Dorsolateral prefrontal cortex (tissue), 120 donors: ENCODE measurements at regions of chr3 and their contacts with region 1.

Region 1: GRCh38 chr3:48439820-48440589 is at the starts of genes CCDC51 and TMA7:
- DNase-seq: peak; percentile 98 to 100 (median 99)
- H3K4me3 ChIP-seq: peak within 1 kb of the TSS; percentile 67 to 100 (median 93)
- H3K27ac ChIP-seq: peak within 1 kb of the TSS in 58 of 59 donors; percentile 48 to 95 (median 84)
- H3K27me3 ChIP-seq: no peaks in the 10 kb centered on the region
- CTCF ChIP-seq: peak in 38 of 56 donors; percentile 5 to 54 (median 22)
- total RNA-seq, gene CCDC51: 5.5 to 17.7 (median 10.0) TPM
- total RNA-seq, gene TMA7: 127 to 251 (median 193) TPM

Region 2: DNA sequence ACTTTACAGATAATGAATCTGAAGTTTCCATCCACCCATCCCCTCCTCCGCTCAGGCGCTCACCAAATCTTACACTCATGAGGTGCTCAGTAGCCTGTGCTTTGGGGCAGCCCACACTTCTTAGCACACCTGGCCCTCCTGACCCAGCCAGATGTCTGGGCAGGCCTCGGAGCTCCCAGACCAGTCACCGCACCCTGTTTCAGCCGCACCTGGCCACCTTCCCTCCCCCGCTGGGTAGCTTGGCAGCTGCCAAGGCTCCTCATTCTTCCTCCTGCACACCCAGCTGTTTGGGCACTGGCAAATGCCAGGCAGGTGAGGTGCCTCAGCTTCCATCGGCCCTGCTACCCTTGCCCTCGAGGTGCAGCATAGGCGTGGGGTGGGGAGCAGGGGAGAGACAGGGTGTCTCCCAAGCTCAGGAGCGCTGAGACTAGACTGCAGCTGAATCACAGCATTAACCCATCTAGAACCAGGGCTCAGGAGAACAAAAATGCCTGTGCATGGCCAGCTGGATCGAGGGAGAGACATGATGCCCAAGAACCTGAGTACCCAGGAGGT is 297.6 kb before region 1 on chr3:
- intact Hi-C with region 1: no loop called
- DNase-seq: no peak
- H3K4me3 ChIP-seq: no peak overlapping the region
- H3K27ac ChIP-seq: no peak overlapping the region
- H3K27me3 ChIP-seq: no peaks in the 10 kb centered on the region
- CTCF ChIP-seq: no peak

Region 3: DNA sequence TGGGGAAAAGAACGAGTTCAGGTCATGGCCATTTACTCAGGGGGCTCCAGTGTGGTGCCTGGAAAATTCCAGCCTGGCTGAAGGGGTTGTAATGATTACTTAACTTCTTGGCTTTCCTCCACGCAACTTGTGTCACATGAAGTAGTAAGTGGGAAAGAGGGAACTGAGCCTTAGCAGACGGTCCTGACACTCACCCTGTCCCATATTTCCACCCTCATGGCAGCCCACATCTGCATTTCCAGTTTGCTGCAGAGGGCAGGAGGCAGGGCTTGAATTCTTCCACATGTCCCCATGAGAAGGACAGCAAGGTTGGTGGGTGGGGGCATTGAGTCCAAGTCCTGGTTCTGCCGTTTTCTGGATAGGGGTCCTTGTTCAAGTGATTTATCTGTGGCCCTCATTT is 224.5 kb before region 1 on chr3:
- intact Hi-C with region 1: no loop called
- DNase-seq: peak in 1 of 10 donors; percentile 5
- H3K4me3 ChIP-seq: no peak overlapping the region
- H3K27ac ChIP-seq: peak overlapping the region in 8 of 59 donors; percentile 11 to 70 (median 36)
- H3K27me3 ChIP-seq: no peaks in the 10 kb centered on the region
- CTCF ChIP-seq: no peak

Region 4: DNA sequence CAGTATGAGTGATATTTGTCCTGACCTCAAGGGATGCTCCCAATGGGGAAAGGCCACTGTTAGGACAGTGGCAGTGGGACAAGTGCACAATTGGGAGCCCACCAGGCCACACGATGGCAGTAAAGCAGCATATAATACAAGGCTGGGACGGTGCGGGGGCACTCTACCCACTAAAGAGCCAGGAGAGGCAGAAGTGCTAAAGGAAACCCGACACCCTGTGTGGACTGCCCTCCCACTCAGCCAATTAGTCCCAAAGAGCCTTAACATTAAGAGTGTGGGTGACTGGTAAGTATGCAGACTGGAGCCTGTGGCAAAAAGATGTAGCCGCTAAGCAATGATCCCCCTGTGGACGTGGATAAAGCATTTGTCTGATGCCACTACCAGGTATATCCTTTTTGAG is 207.3 kb before region 1 on chr3:
- intact Hi-C with region 1: loop called in 1 of 2 experiments (anchors 5 kb)
- DNase-seq: peak; percentile 69 to 94 (median 84)
- H3K4me3 ChIP-seq: peak overlapping the region in 55 of 59 donors; percentile 6 to 66 (median 46)
- H3K27ac ChIP-seq: peak overlapping the region in 21 of 59 donors; percentile 3 to 58 (median 38)
- H3K27me3 ChIP-seq: no peaks in the 10 kb centered on the region
- CTCF ChIP-seq: peak in 55 of 56 donors; percentile 38 to 84 (median 70)

Region 5: DNA sequence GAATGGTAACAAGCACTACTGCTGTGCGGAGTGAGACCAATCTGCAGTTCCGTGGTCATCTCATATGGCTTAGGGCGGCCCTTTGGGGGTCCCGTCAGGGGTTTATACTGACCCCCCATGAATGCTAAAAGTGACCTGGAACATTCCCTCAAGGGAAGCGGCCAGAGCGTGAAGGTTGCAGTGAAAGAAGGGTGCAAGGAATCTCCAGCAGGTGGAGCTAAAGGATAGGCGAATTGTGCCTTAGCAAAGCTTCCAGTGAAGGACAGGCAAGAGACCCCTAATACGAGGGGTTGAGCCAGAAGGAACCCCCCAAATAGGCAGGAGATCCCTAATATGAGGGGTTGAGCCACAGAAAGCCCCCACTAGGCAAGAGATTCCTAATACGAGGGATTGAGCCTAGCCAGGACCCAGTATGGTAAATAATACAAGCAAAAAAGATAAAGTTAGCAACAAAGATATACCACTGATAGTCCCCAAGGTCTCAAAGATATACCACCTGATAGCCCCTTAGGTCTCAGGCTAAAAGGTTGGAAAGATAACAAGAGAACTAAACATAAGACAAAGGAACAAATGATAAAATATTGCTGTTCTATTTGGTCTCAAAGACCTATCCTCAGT is 166.3 kb before region 1 on chr3:
- intact Hi-C with region 1: loop called (anchors 1 to 2 kb)
- DNase-seq: peak in 6 of 10 donors; percentile 21 to 59 (median 50)
- H3K4me3 ChIP-seq: no peak overlapping the region
- H3K27ac ChIP-seq: no peak overlapping the region
- H3K27me3 ChIP-seq: no peaks in the 10 kb centered on the region
- CTCF ChIP-seq: peak; percentile 44 to 87 (median 75)

Region 6: GRCh38 chr3:48285132-48285531 is 154.9 kb before region 1 on chr3:
- intact Hi-C with region 1: no loop called
- DNase-seq: no peak
- H3K4me3 ChIP-seq: no peak overlapping the region
- H3K27ac ChIP-seq: no peak overlapping the region
- H3K27me3 ChIP-seq: no peaks in the 10 kb centered on the region
- CTCF ChIP-seq: no peak

Region 7: GRCh38 chr3:48301020-48301796 is 138.8 kb before region 1 on chr3:
- intact Hi-C with region 1: loop called in 1 of 2 experiments (anchors 5 kb)
- DNase-seq: peak; percentile 77 to 93 (median 86)
- H3K4me3 ChIP-seq: peak within 1 kb of the TSS; percentile 69 to 100 (median 89)
- H3K27ac ChIP-seq: peak within 1 kb of the TSS; percentile 13 to 97 (median 89)
- H3K27me3 ChIP-seq: no peaks in the 10 kb centered on the region
- CTCF ChIP-seq: peak in 36 of 56 donors; percentile 3 to 58 (median 26)

Region 8: DNA sequence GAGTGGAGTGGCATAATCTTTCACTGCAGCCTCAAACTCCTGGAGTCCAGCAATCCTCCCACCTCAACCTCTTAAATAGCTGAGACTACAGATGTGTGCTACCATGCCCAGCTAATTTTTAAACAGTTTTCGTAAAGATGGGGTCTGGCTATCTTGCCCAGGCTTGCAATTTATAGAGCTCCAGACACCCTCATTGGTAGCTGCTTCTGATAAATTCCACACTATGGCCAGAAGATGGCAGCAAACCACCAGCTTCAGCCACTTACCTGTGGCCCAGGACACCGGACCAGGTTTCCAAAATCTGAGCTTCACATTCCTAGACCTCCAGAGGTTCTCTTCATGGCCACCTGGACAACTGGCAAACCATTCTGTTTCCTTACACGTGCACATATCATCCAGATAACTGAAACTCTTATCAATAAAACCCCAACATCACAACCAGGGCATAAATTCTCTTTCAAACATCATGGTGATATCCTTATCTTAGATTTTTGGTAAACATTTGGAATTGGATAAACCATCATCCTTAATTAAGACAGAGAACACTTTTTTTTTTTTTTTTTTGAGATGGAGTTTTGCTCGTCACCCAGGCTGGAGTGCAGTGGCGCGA is 39.1 kb before region 1 on chr3:
- intact Hi-C with region 1: loop called (anchors 1 kb)
- DNase-seq: peak in 9 of 10 donors; percentile 45 to 72 (median 53)
- H3K4me3 ChIP-seq: no peak overlapping the region
- H3K27ac ChIP-seq: peak overlapping the region in 11 of 59 donors; percentile 47 to 78 (median 75)
- H3K27me3 ChIP-seq: no peaks in the 10 kb centered on the region
- CTCF ChIP-seq: peak; percentile 59 to 94 (median 85)

Region 9: GRCh38 chr3:48406443-48407431 is 33.3 kb before region 1 on chr3:
- intact Hi-C with region 1: loop called (anchors 1 kb)
- DNase-seq: peak in 7 of 10 donors; percentile 1 to 40 (median 15)
- H3K4me3 ChIP-seq: no peak overlapping the region
- H3K27ac ChIP-seq: peak overlapping the region in 2 of 59 donors; percentile 31 to 57
- H3K27me3 ChIP-seq: no peaks in the 10 kb centered on the region
- CTCF ChIP-seq: no peak